ENCODE measurements at regions of chr12 and their contacts with region 1.

Region 1: DNA sequence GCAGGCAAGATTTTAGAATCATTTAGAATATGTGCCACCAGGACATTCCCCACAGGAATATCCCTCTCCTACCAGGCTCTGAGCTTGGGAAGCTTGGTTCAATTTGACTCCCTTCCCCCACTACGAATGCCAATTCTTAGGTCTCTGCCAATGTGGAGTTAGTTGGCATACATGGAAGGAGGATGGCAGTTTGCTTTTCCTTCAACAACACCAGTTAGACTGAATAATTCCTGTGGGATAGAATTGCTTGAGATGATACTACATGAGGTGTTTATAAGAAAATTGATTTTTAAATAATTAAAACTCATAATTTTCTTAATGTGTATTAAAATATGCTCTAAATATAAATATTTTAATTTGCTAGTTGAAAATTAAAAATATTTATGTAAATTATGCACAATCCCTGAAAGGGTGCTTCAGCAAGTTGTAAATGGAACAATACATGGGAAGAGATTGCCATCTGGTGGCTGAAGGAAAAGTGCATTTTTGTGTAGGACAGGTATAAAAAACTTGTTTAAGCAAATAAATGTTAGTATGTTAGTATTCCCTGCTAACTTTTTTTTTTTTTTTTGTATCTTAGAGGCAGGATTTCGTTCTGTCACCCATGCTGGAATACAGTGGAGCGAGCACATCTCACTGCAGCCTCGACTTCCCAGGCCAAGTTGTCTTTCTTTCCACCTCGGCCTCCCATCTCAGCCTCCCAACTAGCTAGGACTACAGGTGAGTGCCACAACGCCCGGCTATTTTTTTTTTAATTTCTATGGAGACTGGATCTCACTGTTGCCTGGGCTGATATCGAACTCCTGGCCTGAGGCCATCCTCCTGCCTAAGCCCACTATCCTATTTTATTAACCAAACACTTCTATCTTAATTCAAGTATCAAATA is 25.8 kb upstream of the STRAP start:
- DNase-seq: peak; percentile 38 to 87
- H3K4me3 ChIP-seq: no peak overlapping the region
- H3K27ac ChIP-seq: peak overlapping the region in 1 of 5 donors; percentile 5
- H3K4me1 ChIP-seq: peaks cover 0 to 5% (median 0%) of the 10 kb centered on the region in 4 donors
- H3K27me3 ChIP-seq: peaks cover 0 to 7% (median 0%) of the 10 kb centered on the region in 3 donors
- CTCF ChIP-seq: peak in 5 of 7 experiments; percentile 47 to 84 (median 80)
- EP300 ChIP-seq: no peak
- POLR2A ChIP-seq: no peak

Region 2: GRCh38 chr12:15584366-15585041 is 271.8 kb before region 1 on chr12:
- intact Hi-C with region 1: loop called (anchors 5 kb)
- DNase-seq: peak in 1 of 2 donors; percentile 86
- H3K4me3 ChIP-seq: no peak overlapping the region
- H3K27ac ChIP-seq: no peak overlapping the region
- H3K4me1 ChIP-seq: peaks cover 0 to 8% (median 0%) of the 10 kb centered on the region in 4 donors
- H3K27me3 ChIP-seq: no peaks in the 10 kb centered on the region
- CTCF ChIP-seq: peak in 5 of 7 experiments; percentile 15 to 64 (median 47)
- EP300 ChIP-seq: no peak
- POLR2A ChIP-seq: no peak

Region 3: GRCh38 chr12:15772405-15773018 is 83.8 kb before region 1 on chr12:
- intact Hi-C with region 1: loop called (anchors 10 kb)
- DNase-seq: peak in 1 of 2 donors; percentile 26
- H3K4me3 ChIP-seq: no peak overlapping the region
- H3K27ac ChIP-seq: no peak overlapping the region
- H3K4me1 ChIP-seq: peaks cover 0 to 11% (median 3%) of the 10 kb centered on the region in 4 donors
- H3K27me3 ChIP-seq: no peaks in the 10 kb centered on the region
- CTCF ChIP-seq: peak in 2 of 7 experiments; percentile 34 to 46
- EP300 ChIP-seq: no peak
- POLR2A ChIP-seq: no peak